Colonic mucosa (tissue), 4 donors: ENCODE measurements at regions of chr9 and their contacts with region 1.

Region 1: GRCh38 chr9:36632892-36633291 is 60.2 kb downstream of the MELK start:
- DNase-seq: no peak
- H3K4me3 ChIP-seq: no peak overlapping the region
- H3K27ac ChIP-seq: no peak overlapping the region
- H3K4me1 ChIP-seq: no peaks in the 10 kb centered on the region
- H3K27me3 ChIP-seq: no peaks in the 10 kb centered on the region
- CTCF ChIP-seq: peak; percentile 55

Region 2: GRCh38 chr9:36728651-36729520 is 96.0 kb after region 1 on chr9:
- intact Hi-C with region 1: loop called (anchors 5 kb)
- DNase-seq: peak; percentile 80
- H3K4me3 ChIP-seq: no peak overlapping the region
- H3K27ac ChIP-seq: no peak overlapping the region
- H3K4me1 ChIP-seq: no peaks in the 10 kb centered on the region
- H3K27me3 ChIP-seq: no peaks in the 10 kb centered on the region
- CTCF ChIP-seq: peak; percentile 75